ENCODE measurements at regions of chr17 and their contacts with region 1.

Region 1: GRCh38 chr17:76726231-76726775 is at the start of gene JMJD6:
- DNase-seq: no peak
- ATAC-seq: peak in 1 of 3 donors; percentile 71
- H3K4me3 ChIP-seq: peak within 1 kb of the TSS; percentile 94
- H3K4me3 Mint-ChIP-seq: peak within 1 kb of the TSS; percentile 98
- H3K27ac ChIP-seq: peak within 1 kb of the TSS; percentile 90
- H3K27ac Mint-ChIP-seq: peak within 1 kb of the TSS; percentile 94 to 100
- H3K4me1 ChIP-seq: peaks cover 49% of the 10 kb centered on the region
- H3K4me1 Mint-ChIP-seq: peaks cover 29 to 33% of the 10 kb centered on the region in 2 donors
- H3K27me3 ChIP-seq: no peaks in the 10 kb centered on the region
- H3K27me3 Mint-ChIP-seq: no peaks in the 10 kb centered on the region
- CTCF ChIP-seq: no peak
- total RNA-seq, gene JMJD6: 169 to 257 (median 195) TPM

Region 2: GRCh38 chr17:76737082-76737675 is 10.9 kb after region 1 on chr17 and contains the start of gene SRSF2:
- intact Hi-C with region 1: loop called (anchors 1 kb)
- DNase-seq: peak; percentile 98 to 100
- ATAC-seq: peak; percentile 73 to 89 (median 75)
- H3K4me3 ChIP-seq: peak within 1 kb of the TSS; percentile 81
- H3K4me3 Mint-ChIP-seq: peak within 1 kb of the TSS; percentile 96
- H3K27ac ChIP-seq: peak within 1 kb of the TSS; percentile 98
- H3K27ac Mint-ChIP-seq: peak within 1 kb of the TSS; percentile 99 to 100
- H3K4me1 ChIP-seq: peaks cover 26% of the 10 kb centered on the region
- H3K4me1 Mint-ChIP-seq: peaks cover 53 to 59% of the 10 kb centered on the region in 2 donors
- H3K27me3 ChIP-seq: no peaks in the 10 kb centered on the region
- H3K27me3 Mint-ChIP-seq: no peaks in the 10 kb centered on the region
- CTCF ChIP-seq: no peak
- total RNA-seq, gene SRSF2: 402 to 548 (median 503) TPM

Measured in natural killer cell (primary cell).